Aorta (tissue), 5 donors: ENCODE measurements at regions of chr16 and their contacts with region 1.

Region 1: GRCh38 chr16:30657866-30658730 is at the start of gene FBRS:
- DNase-seq: peak; percentile 100
- ATAC-seq: peak; percentile 95
- H3K4me3 ChIP-seq: peak within 1 kb of the TSS; percentile 94 to 97
- H3K27ac ChIP-seq: peak within 1 kb of the TSS; percentile 91 to 92
- H3K4me1 ChIP-seq: no peaks in the 10 kb centered on the region
- H3K27me3 ChIP-seq: no peaks in the 10 kb centered on the region
- total RNA-seq, gene FBRS: 52.7 to 56.0 TPM

Region 2: GRCh38 chr16:30370444-30371247 is 287.5 kb before region 1 on chr16 and contains the start of gene TBC1D10B:
- intact Hi-C with region 1: loop called in 1 of 2 experiments (anchors 10 kb)
- DNase-seq: peak; percentile 98
- ATAC-seq: peak; percentile 96
- H3K4me3 ChIP-seq: peak within 1 kb of the TSS; percentile 92
- H3K27ac ChIP-seq: peak within 1 kb of the TSS; percentile 20 to 39
- H3K4me1 ChIP-seq: peaks cover 0 to 4% of the 10 kb centered on the region in 2 donors
- H3K27me3 ChIP-seq: no peaks in the 10 kb centered on the region
- total RNA-seq, gene TBC1D10B: 30.7 to 38.0 TPM

Region 3: GRCh38 chr16:30445408-30446202 is 212.5 kb before region 1 on chr16 and contains the start of gene SEPHS2:
- intact Hi-C with region 1: loop called in 1 of 2 experiments (anchors 10 kb)
- DNase-seq: peak; percentile 98 to 99
- ATAC-seq: peak; percentile 96
- H3K4me3 ChIP-seq: peak within 1 kb of the TSS; percentile 68 to 87
- H3K27ac ChIP-seq: peak within 1 kb of the TSS; percentile 61 to 64
- H3K4me1 ChIP-seq: no peaks in the 10 kb centered on the region
- H3K27me3 ChIP-seq: no peaks in the 10 kb centered on the region
- total RNA-seq, gene SEPHS2: 25.1 to 29.3 TPM

Region 4: DNA sequence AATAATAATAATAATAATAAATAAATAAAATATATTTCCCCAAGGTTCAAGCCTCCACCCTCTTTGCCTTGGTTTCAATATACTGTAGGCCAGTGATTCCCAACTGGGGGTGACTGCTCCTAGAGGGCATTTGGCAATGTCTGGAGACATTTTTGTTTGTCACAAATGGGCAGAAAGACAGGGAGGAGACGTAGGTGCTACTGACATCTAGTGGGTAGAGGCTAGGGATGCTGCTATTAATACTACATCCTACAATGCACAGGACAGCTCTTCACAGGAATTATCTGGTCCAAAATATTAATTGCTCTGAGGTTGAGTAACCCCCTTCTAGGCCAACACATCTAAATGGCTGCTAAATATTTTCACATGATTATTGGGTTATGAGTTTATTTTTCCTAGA is 20.2 kb before region 1 on chr16:
- intact Hi-C with region 1: no loop called
- DNase-seq: no peak
- ATAC-seq: no peak
- H3K4me3 ChIP-seq: no peak overlapping the region
- H3K27ac ChIP-seq: no peak overlapping the region
- H3K4me1 ChIP-seq: no peaks in the 10 kb centered on the region
- H3K27me3 ChIP-seq: no peaks in the 10 kb centered on the region

Region 5: DNA sequence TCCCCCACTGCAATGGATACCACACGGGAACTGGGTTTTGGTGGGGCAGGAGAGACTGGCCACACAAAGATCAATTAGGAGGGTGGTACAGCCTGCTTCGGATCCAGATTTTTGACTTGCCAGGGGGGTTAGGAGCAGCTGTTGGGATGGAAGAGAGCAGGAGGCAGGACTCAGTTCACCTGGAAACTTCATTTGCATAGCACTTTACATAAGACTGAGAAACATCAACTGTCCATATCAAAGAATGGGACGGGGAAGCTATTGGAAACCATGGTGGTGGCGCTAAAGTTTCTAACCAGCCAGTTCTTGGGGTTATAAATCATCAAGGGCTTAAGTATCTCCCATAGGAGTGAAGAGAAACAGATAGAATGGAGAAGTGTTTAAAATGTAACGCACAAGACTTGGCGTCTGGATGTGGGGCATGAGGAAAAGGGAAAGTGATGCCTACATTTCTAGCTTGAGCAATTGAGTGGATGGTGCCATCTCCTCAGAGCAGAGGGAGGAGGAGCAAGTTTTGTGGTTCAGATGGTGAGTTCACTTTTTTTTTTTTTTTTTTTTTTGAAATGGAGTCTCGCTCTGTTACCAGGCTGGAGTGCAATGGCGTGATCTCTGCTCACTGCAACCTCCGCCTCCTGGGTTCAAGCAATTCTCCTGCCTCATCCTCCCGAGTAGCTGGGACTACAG is 34.4 kb after region 1 on chr16:
- intact Hi-C with region 1: loop called in 1 of 2 experiments (anchors 5 kb)
- DNase-seq: no peak
- ATAC-seq: no peak
- H3K4me3 ChIP-seq: no peak overlapping the region
- H3K27ac ChIP-seq: no peak overlapping the region
- H3K4me1 ChIP-seq: no peaks in the 10 kb centered on the region
- H3K27me3 ChIP-seq: no peaks in the 10 kb centered on the region

Region 6: GRCh38 chr16:30698139-30698815 is 40.2 kb after region 1 on chr16:
- intact Hi-C with region 1: loop called (anchors 2 to 5 kb)
- DNase-seq: peak; percentile 99 to 100
- ATAC-seq: peak; percentile 95
- H3K4me3 ChIP-seq: peak overlapping the region; percentile 80 to 87
- H3K27ac ChIP-seq: peak overlapping the region; percentile 85 to 90
- H3K4me1 ChIP-seq: peaks cover 0 to 2% of the 10 kb centered on the region in 2 donors
- H3K27me3 ChIP-seq: no peaks in the 10 kb centered on the region

Region 7: DNA sequence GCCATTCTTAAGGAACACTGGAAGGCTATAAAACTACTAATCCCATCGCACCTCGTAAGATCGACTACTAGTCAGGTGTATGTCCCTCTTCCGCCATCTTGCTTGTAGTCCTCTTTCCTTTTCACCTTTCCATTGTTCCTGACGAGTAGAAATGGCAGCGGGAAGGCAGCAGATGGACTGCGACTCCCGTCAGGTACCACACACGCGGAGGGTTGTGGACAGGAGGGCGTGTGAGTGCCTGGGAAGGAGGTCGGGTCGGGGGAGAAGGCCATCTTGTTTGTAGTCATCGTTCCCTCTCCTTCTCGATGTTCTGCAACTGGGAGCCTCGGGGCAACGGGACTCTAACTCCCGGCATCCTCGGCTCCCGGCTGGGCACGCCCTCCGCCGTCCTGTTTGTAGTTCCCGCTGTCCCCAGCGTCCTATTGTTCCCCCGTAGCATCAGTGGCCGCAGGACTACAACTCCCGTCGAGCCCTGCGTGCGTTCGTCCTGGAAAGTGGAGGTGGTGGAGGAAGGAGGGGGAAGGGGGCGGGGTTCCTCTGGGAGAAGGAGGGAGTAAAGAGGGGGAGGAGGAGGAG is 264.9 kb after region 1 on chr16:
- intact Hi-C with region 1: loop called in 1 of 2 experiments (anchors 2 kb)
- DNase-seq: peak; percentile 100
- ATAC-seq: peak; percentile 93
- H3K4me3 ChIP-seq: peak overlapping the region; percentile 49 to 90
- H3K27ac ChIP-seq: peak overlapping the region in 1 of 2 donors; percentile 93
- H3K4me1 ChIP-seq: peaks cover 0 to 1% of the 10 kb centered on the region in 2 donors
- H3K27me3 ChIP-seq: no peaks in the 10 kb centered on the region